Ascending aorta (tissue), 2 donors: ENCODE measurements at regions of chr10 and their contacts with region 1.

Region 1: GRCh38 chr10:107434854-107435253 is 270.3 kb upstream of the SORCS1 start:
- DNase-seq: no peak
- H3K4me3 ChIP-seq: no peak overlapping the region
- H3K27ac ChIP-seq: no peak overlapping the region
- H3K4me1 ChIP-seq: no peaks in the 10 kb centered on the region
- H3K27me3 ChIP-seq: no peaks in the 10 kb centered on the region
- CTCF ChIP-seq: no peak

Region 2: DNA sequence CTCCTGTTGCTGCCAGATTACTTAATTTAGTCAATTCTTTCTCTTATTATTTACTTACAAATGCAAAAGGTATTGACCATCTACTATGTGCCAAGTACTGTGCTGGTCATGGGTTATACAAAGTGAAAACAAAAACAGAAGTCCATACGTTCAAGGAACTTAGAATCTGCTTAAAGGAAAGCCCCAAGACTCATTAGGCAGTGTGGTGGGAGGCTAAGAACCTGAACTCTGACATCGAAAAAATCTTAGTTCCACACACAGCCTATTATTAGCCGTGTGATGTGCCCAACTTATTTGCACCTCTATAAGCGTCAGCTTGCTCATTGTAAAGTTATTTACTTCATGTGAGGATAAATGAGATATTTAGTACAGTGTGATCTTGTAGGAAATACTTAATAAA is 43.0 kb before region 1 on chr10:
- intact Hi-C with region 1: no loop called
- DNase-seq: no peak
- H3K4me3 ChIP-seq: no peak overlapping the region
- H3K27ac ChIP-seq: no peak overlapping the region
- H3K4me1 ChIP-seq: no peaks in the 10 kb centered on the region
- H3K27me3 ChIP-seq: no peaks in the 10 kb centered on the region
- CTCF ChIP-seq: no peak

Region 3: GRCh38 chr10:107502229-107502985 is 67.6 kb after region 1 on chr10:
- intact Hi-C with region 1: loop called (anchors 2 kb)
- DNase-seq: no peak
- H3K4me3 ChIP-seq: no peak overlapping the region
- H3K27ac ChIP-seq: no peak overlapping the region
- H3K4me1 ChIP-seq: no peaks in the 10 kb centered on the region
- H3K27me3 ChIP-seq: no peaks in the 10 kb centered on the region
- CTCF ChIP-seq: no peak

Region 4: DNA sequence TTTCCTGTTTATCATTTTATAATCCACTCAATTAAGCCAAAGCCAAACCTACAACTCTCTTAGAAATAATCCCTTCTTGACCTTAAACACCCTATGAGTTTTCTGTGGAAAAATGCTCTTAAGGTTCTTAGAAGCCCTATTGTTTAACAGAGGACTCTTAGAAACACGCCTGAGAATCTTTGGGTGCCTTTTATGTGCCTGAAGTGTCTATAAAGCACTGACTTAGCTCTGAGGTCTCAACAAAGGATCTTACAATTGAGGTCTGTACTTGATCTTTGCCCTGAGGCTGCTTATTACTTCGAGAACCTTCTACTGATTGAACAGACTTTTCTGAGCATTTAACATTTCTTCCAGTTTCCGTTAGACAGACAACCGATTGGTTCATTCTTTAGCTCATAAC is 83.0 kb after region 1 on chr10:
- intact Hi-C with region 1: no loop called
- DNase-seq: no peak
- H3K4me3 ChIP-seq: no peak overlapping the region
- H3K27ac ChIP-seq: no peak overlapping the region
- H3K4me1 ChIP-seq: no peaks in the 10 kb centered on the region
- H3K27me3 ChIP-seq: no peaks in the 10 kb centered on the region
- CTCF ChIP-seq: no peak

Region 5: DNA sequence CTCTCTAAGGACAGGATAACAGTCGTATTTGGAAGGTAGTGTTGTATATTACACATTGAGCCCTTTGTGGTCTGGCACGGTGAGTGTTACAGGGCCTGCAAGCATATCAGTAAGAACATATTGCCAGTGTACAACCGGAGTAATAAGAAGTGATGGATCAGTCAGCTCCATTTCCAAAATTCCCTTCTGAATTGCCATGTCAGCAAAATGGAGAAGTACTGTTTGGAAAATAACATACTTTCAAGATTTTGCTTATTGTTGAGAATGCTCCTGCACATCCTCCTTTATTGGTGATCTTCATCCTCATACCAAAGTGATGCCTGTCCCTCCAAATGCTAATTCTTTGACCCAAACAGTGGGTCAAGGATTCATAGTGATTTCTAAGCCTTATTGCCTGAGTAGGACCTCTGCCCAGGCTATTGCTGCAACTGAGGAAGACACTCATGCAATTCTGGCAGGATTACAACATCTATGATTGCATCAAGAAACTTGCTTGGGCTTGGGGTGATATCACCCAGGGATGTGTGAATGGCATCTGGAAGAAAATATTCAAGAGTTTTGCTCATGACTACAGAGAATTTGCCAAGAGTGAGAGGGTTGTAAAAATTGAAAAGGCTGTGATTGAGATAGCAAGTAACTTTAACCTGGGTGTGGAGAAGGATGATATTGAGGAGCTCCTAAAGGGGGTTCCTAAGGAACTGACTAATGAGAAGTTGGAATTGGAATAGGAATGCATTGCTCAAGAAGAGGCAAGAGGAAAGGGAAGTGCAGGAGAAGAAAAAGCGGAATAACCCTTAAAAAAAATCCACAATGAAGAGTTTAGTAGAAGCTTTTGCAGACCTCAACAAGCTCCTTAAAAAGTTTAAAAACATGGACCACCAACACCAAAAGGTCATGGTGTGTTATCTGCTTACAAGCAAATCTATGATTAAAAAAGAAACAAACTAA is 181.9 kb after region 1 on chr10:
- intact Hi-C with region 1: no loop called
- DNase-seq: no peak
- H3K4me3 ChIP-seq: no peak overlapping the region
- H3K27ac ChIP-seq: no peak overlapping the region
- H3K4me1 ChIP-seq: no peaks in the 10 kb centered on the region
- H3K27me3 ChIP-seq: no peaks in the 10 kb centered on the region
- CTCF ChIP-seq: no peak